Mammary epithelial cell (primary cell): ENCODE measurements at regions of chr16 and their contacts with region 1.

Region 1: GRCh38 chr16:75305364-75306098 is 54.1 kb upstream of the BCAR1 start:
- DNase-seq: peak; percentile 100
- H3K4me3 ChIP-seq: peak overlapping the region in 2 of 3 experiments; percentile 8 to 10
- H3K27ac ChIP-seq: peak overlapping the region; percentile 96
- H3K4me1 ChIP-seq: peaks cover 35% of the 10 kb centered on the region
- H3K27me3 ChIP-seq: no peaks in the 10 kb centered on the region
- CTCF ChIP-seq: peak in 1 of 2 donors; percentile 33

Region 2: GRCh38 chr16:75238132-75238852 is 67.2 kb before region 1 on chr16:
- CTCF ChIA-PET with region 1: interaction called, 4 read pairs
- dilution Hi-C with region 1: loop called (anchors 5 kb)
- in situ Hi-C with region 1: no loop called
- intact Hi-C with region 1: loop called (anchors 1 kb)
- DNase-seq: no peak
- H3K4me3 ChIP-seq: no peak overlapping the region
- H3K27ac ChIP-seq: peak overlapping the region; percentile 10
- H3K4me1 ChIP-seq: peaks cover 57% of the 10 kb centered on the region
- H3K27me3 ChIP-seq: no peaks in the 10 kb centered on the region
- CTCF ChIP-seq: no peak

Region 3: DNA sequence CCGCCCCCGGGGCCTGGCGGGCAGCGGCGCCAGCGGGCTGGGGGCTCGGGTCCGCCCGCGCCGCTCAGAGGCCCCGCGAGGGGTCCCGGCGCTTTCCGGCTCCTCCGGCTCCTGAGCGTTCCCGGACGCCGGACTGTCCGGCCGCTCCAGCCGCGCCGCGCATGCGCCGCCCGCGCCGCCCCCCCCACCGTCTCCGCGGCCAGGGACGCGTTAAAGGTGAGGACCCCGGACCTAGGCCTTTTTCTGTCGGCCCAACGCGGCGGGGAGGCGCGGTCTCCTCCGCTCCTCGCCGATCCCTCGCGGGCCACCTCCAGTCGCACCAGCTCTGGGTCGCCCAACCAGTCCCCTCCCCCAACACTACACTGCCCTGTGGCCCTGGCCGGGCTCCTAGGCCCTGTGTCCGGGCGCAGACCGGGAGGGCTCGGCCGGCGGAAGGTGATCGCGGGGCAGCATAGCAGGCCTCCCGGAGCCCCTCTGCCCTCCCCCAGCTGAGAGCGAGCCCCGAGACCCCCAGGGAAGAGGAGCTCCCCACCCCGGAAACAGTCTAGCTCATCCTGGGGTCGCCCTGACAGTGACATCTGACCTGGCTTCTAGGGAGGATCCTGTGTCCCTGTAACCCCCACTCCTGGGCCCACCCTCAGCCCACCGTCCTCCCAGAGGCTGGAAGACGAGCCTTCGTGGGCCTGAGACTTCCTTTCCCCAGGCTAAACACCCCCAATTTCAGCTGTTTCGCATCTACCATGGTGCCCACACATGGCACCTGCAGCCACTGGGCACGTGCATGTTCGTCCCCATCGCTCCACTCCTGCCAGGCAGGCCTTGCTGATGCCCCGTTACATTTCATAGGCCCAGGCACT is 39.5 kb before region 1 on chr16:
- CTCF ChIA-PET with region 1: no interaction called
- dilution Hi-C with region 1: loop called (anchors 5 kb)
- in situ Hi-C with region 1: no loop called
- intact Hi-C with region 1: loop called (anchors 1 kb)
- DNase-seq: peak; percentile 53
- H3K4me3 ChIP-seq: peak overlapping the region; percentile 57 to 83 (median 62)
- H3K27ac ChIP-seq: peak overlapping the region; percentile 63
- H3K4me1 ChIP-seq: peaks cover 50% of the 10 kb centered on the region
- H3K27me3 ChIP-seq: no peaks in the 10 kb centered on the region
- CTCF ChIP-seq: no peak

Region 4: DNA sequence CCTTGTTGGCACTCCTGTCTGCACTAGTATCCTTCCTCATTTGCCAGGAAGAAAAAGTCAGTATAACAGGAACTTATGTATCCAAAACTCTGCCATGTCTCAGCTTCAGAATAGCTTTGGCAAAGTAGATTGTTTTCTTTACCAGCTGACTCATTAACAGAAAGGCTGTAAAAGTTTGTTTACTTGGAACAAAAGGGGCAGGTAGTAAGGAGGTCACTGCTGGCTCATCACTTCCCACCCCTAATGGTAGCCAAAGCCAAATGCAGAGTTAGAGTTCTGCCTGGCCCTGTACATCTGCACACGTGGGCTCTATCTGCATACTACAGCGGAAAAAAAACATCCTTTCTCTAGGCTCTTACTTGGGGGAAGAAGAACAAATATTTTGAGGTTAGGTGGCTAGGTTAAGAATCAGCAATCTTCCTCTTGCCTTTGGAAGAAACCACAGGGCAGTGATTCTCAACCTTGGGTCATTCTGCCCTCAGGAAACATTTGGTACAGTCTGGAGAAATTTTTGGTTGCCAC is 36.8 kb after region 1 on chr16:
- CTCF ChIA-PET with region 1: no interaction called
- dilution Hi-C with region 1: loop called (anchors 5 kb)
- in situ Hi-C with region 1: no loop called
- intact Hi-C with region 1: no loop called
- DNase-seq: peak; percentile 75
- H3K4me3 ChIP-seq: no peak overlapping the region
- H3K27ac ChIP-seq: no peak overlapping the region
- H3K4me1 ChIP-seq: peaks cover 33% of the 10 kb centered on the region
- H3K27me3 ChIP-seq: no peaks in the 10 kb centered on the region
- CTCF ChIP-seq: no peak

Region 5: DNA sequence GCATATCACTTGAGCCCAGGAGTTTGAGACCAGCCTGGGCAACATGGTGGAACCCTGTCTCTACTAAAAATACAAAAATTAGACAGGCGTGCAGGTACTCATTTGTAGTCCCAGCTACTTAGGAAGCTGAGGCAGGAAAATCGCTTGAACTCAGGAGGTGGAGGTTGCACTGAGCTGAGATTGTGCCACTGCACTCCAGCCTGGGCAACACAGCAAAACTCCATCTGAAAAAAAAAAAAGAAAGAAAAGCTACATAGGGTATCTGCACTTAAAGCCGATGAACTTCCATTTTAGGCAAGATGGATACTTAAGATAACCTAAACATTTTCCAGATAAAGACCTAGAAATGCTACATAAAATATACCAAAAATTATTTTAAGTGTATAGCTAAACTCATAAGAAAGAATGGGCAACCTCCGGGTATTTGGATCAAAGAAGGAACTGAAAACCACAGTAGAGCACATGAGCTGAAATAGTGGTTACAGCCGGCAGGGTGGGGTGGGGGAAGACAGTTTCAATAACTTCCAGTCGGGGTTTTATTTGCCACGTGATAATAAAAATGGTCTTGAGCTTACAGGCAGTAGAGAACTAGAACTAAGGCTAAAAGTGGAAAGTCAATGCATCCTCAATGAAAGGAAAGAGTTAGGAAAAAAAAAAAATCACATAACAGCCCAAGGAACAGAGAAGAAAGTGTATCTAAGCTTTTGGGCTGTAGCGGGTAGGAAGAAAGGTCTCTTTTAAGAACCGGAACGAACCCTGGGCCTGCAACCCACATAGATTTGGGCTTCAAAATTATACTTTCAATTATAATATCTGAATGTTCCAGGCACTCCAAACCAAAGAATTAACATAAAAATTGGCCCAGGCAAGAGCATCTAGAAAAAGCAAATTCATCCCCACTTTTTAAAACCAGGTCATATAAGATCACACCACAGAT is 74.6 kb after region 1 on chr16:
- CTCF ChIA-PET with region 1: interaction called, 5 read pairs
- dilution Hi-C with region 1: loop called (anchors 5 kb)
- in situ Hi-C with region 1: no loop called
- intact Hi-C with region 1: loop called (anchors 1 kb)
- DNase-seq: no peak
- H3K4me3 ChIP-seq: no peak overlapping the region
- H3K27ac ChIP-seq: no peak overlapping the region
- H3K4me1 ChIP-seq: peaks cover 46% of the 10 kb centered on the region
- H3K27me3 ChIP-seq: no peaks in the 10 kb centered on the region
- CTCF ChIP-seq: no peak

Region 6: GRCh38 chr16:75566040-75566810 is 260.7 kb after region 1 on chr16 and contains the start of gene GABARAPL2:
- CTCF ChIA-PET with region 1: no interaction called
- dilution Hi-C with region 1: no loop called
- in situ Hi-C with region 1: no loop called
- intact Hi-C with region 1: loop called (anchors 5 kb)
- DNase-seq: peak; percentile 70
- H3K4me3 ChIP-seq: peak within 1 kb of the TSS; percentile 73 to 87 (median 78)
- H3K27ac ChIP-seq: peak within 1 kb of the TSS; percentile 69
- H3K4me1 ChIP-seq: peaks cover 11% of the 10 kb centered on the region
- H3K27me3 ChIP-seq: no peaks in the 10 kb centered on the region
- CTCF ChIP-seq: no peak
- total RNA-seq, gene GABARAPL2: 41.2 to 63.2 TPM

Region 7: DNA sequence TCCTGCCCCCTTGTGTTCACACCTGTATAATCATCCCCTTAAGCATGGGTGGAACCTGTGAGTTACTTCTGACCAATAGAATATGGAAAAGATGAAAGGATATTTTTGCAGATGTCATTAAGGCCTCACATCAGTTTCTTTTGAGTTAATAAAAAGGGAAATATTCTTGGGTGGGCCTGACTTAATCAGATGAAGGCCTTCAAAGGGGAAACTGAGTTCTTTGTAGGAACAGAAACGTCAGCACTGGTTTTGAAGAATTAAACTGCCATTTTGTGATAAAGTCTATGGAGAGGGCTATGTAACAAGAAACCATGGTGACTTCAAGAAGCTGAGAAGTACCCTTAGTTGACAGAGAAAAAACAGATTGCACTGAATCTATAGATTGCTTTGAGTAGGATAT is 802.9 kb after region 1 on chr16:
- CTCF ChIA-PET with region 1: no interaction called
- dilution Hi-C with region 1: no loop called
- in situ Hi-C with region 1: no loop called
- intact Hi-C with region 1: no loop called
- DNase-seq: no peak
- H3K4me3 ChIP-seq: no peak overlapping the region
- H3K27ac ChIP-seq: no peak overlapping the region
- H3K4me1 ChIP-seq: no peaks in the 10 kb centered on the region
- H3K27me3 ChIP-seq: no peaks in the 10 kb centered on the region
- CTCF ChIP-seq: no peak

Region 8: GRCh38 chr16:77183137-77183536 is 1877.6 kb after region 1 on chr16:
- CTCF ChIA-PET with region 1: no interaction called
- dilution Hi-C with region 1: no loop called
- in situ Hi-C with region 1: no loop called
- intact Hi-C with region 1: no loop called
- DNase-seq: peak; percentile 10
- H3K4me3 ChIP-seq: no peak overlapping the region
- H3K27ac ChIP-seq: no peak overlapping the region
- H3K4me1 ChIP-seq: no peaks in the 10 kb centered on the region
- H3K27me3 ChIP-seq: no peaks in the 10 kb centered on the region
- CTCF ChIP-seq: no peak